CD4-positive, alpha-beta T cell (primary cell): ENCODE measurements at regions of chr1 and their contacts with region 1.

Region 1: GRCh38 chr1:155978325-155978972 is at the start of gene ARHGEF2:
- DNase-seq: peak; percentile 42 to 86 (median 75)
- ATAC-seq: peak; percentile 59
- H3K4me3 ChIP-seq: peak within 1 kb of the TSS; percentile 93
- H3K4me3 Mint-ChIP-seq: peak within 1 kb of the TSS; percentile 97
- H3K27ac ChIP-seq: peak within 1 kb of the TSS; percentile 66 to 89
- H3K27ac Mint-ChIP-seq: peak within 1 kb of the TSS; percentile 86
- H3K4me1 ChIP-seq: peaks cover 78% of the 10 kb centered on the region
- H3K4me1 Mint-ChIP-seq: peaks cover 75% of the 10 kb centered on the region
- H3K27me3 ChIP-seq: no peaks in the 10 kb centered on the region
- H3K27me3 Mint-ChIP-seq: no peaks in the 10 kb centered on the region
- CTCF ChIP-seq: peak; percentile 21
- total RNA-seq, gene ARHGEF2: 54.8 to 62.4 TPM

Region 2: GRCh38 chr1:155859234-155859829 is 119.1 kb before region 1 on chr1 and contains the start of gene SYT11:
- CTCF ChIA-PET with region 1: no interaction called
- POLR2A ChIA-PET with region 1: interaction called, 7 read pairs
- intact Hi-C with region 1: loop called in 1 of 2 experiments (anchors 5 kb)
- DNase-seq: peak; percentile 83 to 97 (median 92)
- ATAC-seq: peak; percentile 89
- H3K4me3 ChIP-seq: peak within 1 kb of the TSS; percentile 62
- H3K4me3 Mint-ChIP-seq: peak within 1 kb of the TSS; percentile 93
- H3K27ac ChIP-seq: peak within 1 kb of the TSS; percentile 42 to 81
- H3K27ac Mint-ChIP-seq: peak within 1 kb of the TSS; percentile 81
- H3K4me1 ChIP-seq: peaks cover 38% of the 10 kb centered on the region
- H3K4me1 Mint-ChIP-seq: peaks cover 33% of the 10 kb centered on the region
- H3K27me3 ChIP-seq: peaks cover 0 to 8% of the 10 kb centered on the region in 2 experiments
- H3K27me3 Mint-ChIP-seq: peaks cover 25% of the 10 kb centered on the region
- CTCF ChIP-seq: no peak
- total RNA-seq, gene SYT11: 6.1 to 6.3 TPM

Region 3: GRCh38 chr1:155940531-155940992 is 37.9 kb before region 1 on chr1:
- CTCF ChIA-PET with region 1: interaction called, 15 read pairs
- POLR2A ChIA-PET with region 1: interaction called, 92 read pairs
- intact Hi-C with region 1: loop called (anchors 1 to 2 kb)
- DNase-seq: peak in 2 of 14 experiments; percentile 14 to 27
- ATAC-seq: peak; percentile 43
- H3K4me3 ChIP-seq: no peak overlapping the region
- H3K4me3 Mint-ChIP-seq: peak overlapping the region; percentile 10
- H3K27ac ChIP-seq: peak overlapping the region; percentile 9 to 43
- H3K27ac Mint-ChIP-seq: peak overlapping the region; percentile 72
- H3K4me1 ChIP-seq: peaks cover 51% of the 10 kb centered on the region
- H3K4me1 Mint-ChIP-seq: peaks cover 42% of the 10 kb centered on the region
- H3K27me3 ChIP-seq: no peaks in the 10 kb centered on the region
- H3K27me3 Mint-ChIP-seq: no peaks in the 10 kb centered on the region
- CTCF ChIP-seq: no peak

Region 4: DNA sequence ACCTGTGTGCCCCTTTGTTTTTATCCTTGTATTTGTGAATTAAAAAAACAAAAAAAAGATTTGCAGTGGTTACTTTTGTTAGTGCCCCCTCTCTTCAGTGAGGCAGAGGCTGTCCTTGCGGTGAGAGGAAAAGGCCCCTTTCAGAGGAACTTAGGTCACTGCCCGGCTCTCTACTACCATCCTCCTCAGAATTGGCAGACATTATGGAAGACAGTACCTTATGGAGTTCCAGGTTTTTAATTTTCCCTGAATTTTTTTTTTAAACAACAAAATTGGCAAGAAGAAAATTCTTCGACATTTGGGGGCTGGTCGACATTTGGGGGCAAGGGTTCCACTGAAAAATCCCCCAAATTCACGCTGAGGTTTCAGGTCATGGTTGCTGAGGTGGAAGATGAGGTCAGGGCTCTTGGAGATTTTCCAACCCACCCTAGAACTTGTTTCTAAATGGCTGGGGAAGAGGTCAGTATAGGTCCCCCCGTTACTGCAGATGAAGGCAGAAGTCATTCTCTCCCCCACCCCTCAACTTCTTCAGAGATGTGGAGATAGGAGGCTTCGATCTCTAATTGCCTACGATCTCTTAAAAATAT is 31.7 kb before region 1 on chr1:
- CTCF ChIA-PET with region 1: interaction called, 3 read pairs
- POLR2A ChIA-PET with region 1: interaction called, 65 read pairs
- intact Hi-C with region 1: loop called in 1 of 2 experiments (anchors 2 kb)
- DNase-seq: no peak
- ATAC-seq: no peak
- H3K4me3 ChIP-seq: no peak overlapping the region
- H3K4me3 Mint-ChIP-seq: no peak overlapping the region
- H3K27ac ChIP-seq: peak overlapping the region; percentile 56 to 67
- H3K27ac Mint-ChIP-seq: peak overlapping the region; percentile 91
- H3K4me1 ChIP-seq: peaks cover 47% of the 10 kb centered on the region
- H3K4me1 Mint-ChIP-seq: peaks cover 32% of the 10 kb centered on the region
- H3K27me3 ChIP-seq: no peaks in the 10 kb centered on the region
- H3K27me3 Mint-ChIP-seq: no peaks in the 10 kb centered on the region
- CTCF ChIP-seq: no peak

Region 5: DNA sequence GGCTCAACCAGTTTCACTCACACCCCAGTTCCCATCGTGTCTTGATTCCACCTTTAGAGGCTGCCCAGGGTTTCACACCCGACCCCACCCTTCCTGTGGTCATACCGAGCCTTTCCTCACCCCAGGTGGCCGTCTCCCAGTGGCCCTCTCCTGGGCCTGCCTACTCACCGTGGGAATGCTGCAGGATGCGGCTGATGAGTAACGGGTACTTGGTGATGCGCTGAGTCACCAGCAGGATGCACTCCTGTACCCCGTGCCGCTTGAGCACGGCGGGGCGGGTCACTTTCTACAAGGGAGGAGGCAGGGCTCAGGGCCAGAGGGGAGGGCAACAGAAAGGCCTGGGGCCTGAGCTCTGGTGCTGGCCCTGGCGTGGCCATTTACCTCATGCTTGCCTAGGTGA is 16.5 kb before region 1 on chr1:
- CTCF ChIA-PET with region 1: interaction called, 10 read pairs
- POLR2A ChIA-PET with region 1: interaction called, 96 read pairs
- intact Hi-C with region 1: loop called in 1 of 2 experiments (anchors 2 kb)
- DNase-seq: peak in 4 of 14 experiments; percentile 31 to 69 (median 50)
- ATAC-seq: peak; percentile 49
- H3K4me3 ChIP-seq: no peak overlapping the region
- H3K4me3 Mint-ChIP-seq: no peak overlapping the region
- H3K27ac ChIP-seq: peak overlapping the region; percentile 34 to 39
- H3K27ac Mint-ChIP-seq: peak overlapping the region; percentile 63
- H3K4me1 ChIP-seq: peaks cover 35% of the 10 kb centered on the region
- H3K4me1 Mint-ChIP-seq: peaks cover 2% of the 10 kb centered on the region
- H3K27me3 ChIP-seq: no peaks in the 10 kb centered on the region
- H3K27me3 Mint-ChIP-seq: no peaks in the 10 kb centered on the region
- CTCF ChIP-seq: no peak

Region 6: DNA sequence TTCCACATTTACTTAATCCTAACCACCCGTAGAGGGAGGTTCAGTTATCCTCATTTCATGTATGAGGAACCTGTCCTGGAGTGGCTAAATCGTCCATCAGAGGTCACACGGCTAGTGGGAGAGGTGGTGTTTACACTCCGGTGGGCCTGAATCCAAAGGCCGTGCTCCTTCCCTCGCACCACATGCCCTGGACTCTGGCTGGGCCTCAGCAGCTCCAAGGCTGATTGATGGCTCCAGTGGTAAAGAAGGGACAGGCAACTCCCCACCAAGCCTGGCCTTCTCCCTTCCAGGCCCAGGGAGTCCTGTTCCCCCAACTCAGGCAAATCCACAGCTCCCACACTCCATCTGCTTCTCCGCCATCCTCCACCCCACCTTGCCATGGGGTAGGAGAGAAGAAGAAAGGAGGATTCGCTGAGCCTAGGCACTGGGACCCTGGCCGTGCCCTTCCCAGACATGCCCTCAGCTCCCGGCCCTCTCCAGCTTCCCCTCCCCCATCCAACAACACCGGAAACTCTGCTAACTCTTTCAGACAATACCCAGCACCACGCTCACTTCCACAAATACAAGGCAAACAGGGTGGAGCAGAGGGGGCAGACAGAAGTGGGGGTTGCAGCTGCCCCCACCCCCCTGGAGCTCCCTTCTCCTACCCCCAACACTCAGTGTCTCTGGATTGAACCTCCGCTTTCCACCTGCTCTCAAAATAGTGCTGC is 11.0 kb before region 1 on chr1:
- CTCF ChIA-PET with region 1: interaction called, 10 read pairs
- POLR2A ChIA-PET with region 1: interaction called, 96 read pairs
- intact Hi-C with region 1: loop called in 1 of 2 experiments (anchors 2 kb)
- DNase-seq: peak in 8 of 14 experiments; percentile 26 to 56 (median 42)
- ATAC-seq: peak; percentile 74
- H3K4me3 ChIP-seq: peak overlapping the region; percentile 3
- H3K4me3 Mint-ChIP-seq: peak overlapping the region; percentile 81
- H3K27ac ChIP-seq: peak overlapping the region; percentile 59 to 82
- H3K27ac Mint-ChIP-seq: peak overlapping the region; percentile 86
- H3K4me1 ChIP-seq: peaks cover 81% of the 10 kb centered on the region
- H3K4me1 Mint-ChIP-seq: peaks cover 58% of the 10 kb centered on the region
- H3K27me3 ChIP-seq: no peaks in the 10 kb centered on the region
- H3K27me3 Mint-ChIP-seq: no peaks in the 10 kb centered on the region
- CTCF ChIP-seq: no peak

Region 7: DNA sequence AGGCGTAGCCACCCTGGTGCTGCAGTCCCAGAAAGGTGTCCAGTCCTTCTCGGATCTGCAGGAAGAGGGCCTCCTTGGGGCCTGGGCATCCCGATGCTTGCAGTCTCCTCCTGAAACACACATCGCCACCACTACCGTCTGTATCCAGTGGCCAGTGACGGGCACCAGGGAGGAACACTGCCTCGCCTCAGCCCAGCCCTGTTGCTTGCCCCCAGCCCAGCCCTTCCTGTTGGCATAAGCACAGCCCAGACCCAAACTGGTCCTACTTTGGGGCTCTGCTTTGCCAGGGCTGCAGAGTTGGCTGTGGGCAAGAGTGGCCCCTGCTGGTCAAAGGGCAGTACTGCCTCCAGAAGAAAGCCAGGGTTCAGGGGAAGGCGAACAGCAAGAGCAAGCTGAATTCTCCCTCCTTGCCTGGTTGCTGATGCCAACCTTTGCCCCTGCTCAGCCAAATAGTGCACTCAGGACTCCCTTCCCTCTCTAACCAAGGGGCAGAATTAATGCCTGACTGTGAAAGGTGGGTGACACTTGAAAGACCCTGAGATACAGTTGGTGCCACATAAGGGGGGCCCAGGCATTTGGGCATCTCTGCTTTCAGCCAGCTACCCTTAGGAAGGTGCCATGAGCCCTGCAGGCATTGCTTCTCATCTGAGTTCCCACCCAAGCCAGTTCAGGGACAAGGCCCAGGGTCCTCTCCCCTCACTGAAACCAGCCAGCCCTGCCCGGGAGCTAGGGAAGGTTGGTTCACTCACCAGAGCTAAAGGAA is 11.0 kb after region 1 on chr1:
- CTCF ChIA-PET with region 1: interaction called, 8 read pairs
- POLR2A ChIA-PET with region 1: interaction called, 9 read pairs
- intact Hi-C with region 1: loop called in 1 of 2 experiments (anchors 1 kb)
- DNase-seq: peak; percentile 67 to 89 (median 76)
- ATAC-seq: peak; percentile 100
- H3K4me3 ChIP-seq: no peak overlapping the region
- H3K4me3 Mint-ChIP-seq: no peak overlapping the region
- H3K27ac ChIP-seq: no peak overlapping the region
- H3K27ac Mint-ChIP-seq: no peak overlapping the region
- H3K4me1 ChIP-seq: peaks cover 15% of the 10 kb centered on the region
- H3K4me1 Mint-ChIP-seq: peaks cover 11% of the 10 kb centered on the region
- H3K27me3 ChIP-seq: no peaks in the 10 kb centered on the region
- H3K27me3 Mint-ChIP-seq: no peaks in the 10 kb centered on the region
- CTCF ChIP-seq: peak; percentile 91